ENCODE measurements at regions of chr1 and their contacts with region 1.

Region 1: DNA sequence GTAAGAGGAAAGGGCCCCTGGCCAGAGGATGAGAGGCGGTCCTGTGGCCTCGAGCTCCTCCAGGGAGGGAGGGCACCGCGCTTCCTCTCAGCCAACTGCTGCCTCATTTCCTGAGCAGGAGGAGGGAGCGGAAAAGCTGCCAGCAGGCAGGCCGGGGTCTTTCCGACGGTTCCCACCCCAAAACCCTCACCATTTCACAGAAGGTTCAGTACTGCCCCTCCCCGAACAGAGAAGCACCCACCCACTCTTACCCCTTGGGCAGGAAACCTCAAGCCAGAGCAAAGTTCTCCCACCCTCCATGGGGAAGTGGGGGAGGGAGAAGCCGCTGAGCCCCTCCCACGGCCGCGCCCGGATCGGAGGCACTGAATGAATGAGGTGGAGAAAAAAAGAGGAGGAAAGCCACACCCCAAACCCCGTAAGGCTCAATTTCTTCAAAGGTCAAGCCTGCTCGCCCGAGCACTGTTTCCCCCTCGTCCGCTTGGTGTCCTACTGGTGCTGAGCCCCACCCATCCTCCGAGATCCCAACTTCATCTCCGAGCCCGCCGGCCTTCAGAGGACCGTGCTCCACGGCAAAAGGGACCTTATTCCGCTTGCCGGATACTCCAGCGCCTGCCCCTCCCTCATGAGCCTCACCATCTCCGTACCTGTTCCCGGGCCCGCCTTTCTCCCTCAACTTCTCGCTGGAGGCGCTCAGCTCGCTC is 9.4 kb downstream of the TPM3 start:
- DNase-seq: peak; percentile 76 to 84
- H3K4me3 ChIP-seq: peak overlapping the region; percentile 70
- H3K4me3 Mint-ChIP-seq: peak overlapping the region; percentile 92
- H3K27ac Mint-ChIP-seq: peak overlapping the region; percentile 96
- H3K4me1 ChIP-seq: peaks cover 59% of the 10 kb centered on the region
- H3K4me1 Mint-ChIP-seq: peaks cover 56% of the 10 kb centered on the region
- H3K27me3 ChIP-seq: no peaks in the 10 kb centered on the region
- H3K27me3 Mint-ChIP-seq: no peaks in the 10 kb centered on the region
- CTCF ChIP-seq: peak in 1 of 2 experiments; percentile 14

Region 2: DNA sequence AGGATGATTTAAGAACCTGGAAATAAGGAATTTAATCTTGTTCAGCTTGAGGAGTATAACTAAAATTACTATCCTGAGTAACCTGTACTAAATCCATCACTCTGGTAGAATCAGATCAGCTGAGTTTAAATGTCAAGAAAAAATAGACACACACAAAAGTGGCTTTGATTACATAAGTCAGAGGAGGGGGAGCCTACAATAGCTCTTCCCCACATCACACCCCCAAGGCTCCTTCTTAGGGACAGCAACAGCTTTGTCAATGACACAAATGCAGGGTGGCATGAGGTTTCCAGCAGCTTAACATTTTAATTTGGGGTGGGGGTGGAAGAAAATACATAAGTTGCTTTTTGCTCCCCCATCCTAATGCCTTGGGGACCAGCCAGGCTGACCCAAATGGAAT is 15.0 kb before region 1 on chr1:
- CTCF ChIA-PET with region 1: no interaction called
- POLR2A ChIA-PET with region 1: interaction called, 12 read pairs
- intact Hi-C with region 1: no loop called
- DNase-seq: no peak
- H3K4me3 ChIP-seq: no peak overlapping the region
- H3K4me3 Mint-ChIP-seq: no peak overlapping the region
- H3K27ac Mint-ChIP-seq: no peak overlapping the region
- H3K4me1 ChIP-seq: no peaks in the 10 kb centered on the region
- H3K4me1 Mint-ChIP-seq: peaks cover 20% of the 10 kb centered on the region
- H3K27me3 ChIP-seq: no peaks in the 10 kb centered on the region
- H3K27me3 Mint-ChIP-seq: no peaks in the 10 kb centered on the region
- CTCF ChIP-seq: no peak

Region 3: DNA sequence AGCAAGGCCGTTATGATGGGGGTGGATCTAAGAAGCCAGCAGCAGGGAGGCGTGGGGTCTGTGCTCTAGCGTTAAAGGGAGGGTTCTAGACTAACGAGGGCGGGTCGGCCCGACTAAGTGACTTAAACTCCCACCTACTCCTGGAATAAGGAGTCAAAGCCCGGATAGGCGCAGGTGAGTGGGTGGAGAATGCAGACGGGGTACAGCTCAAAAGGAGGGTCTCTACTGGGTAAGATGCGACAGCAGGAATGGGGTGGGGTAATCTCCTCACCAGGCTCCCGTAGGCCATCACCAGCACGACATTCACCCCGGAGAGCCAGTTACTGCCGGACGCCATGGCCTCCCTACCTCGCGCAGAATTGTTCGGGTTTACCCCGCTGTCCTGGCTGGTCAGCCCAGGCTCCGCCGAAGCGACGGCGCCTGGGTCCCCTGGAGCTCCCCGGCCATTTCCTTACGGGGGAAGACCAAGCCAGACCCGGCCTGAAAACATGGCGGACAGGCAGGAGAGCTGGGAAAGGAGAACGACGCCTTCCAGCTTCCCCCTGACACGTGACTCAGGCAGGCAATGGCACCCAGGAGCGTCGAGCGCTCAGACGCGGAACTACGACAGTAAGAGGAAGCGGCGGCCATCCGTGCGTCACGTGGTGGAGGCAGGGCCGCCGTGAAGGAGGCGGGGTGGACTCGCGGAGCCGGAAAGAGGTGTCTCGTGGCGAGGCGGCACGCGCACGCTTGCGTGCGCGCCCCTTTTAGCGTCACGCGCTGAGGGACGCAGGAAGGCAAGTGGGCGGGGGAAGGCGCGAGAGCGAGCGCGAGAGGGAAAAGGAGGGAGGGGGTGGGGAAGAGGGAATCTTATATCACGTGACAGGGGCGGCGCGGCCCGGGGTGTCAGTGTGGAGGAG is 37.8 kb after region 1 on chr1 and contains the start of gene UBAP2L:
- CTCF ChIA-PET with region 1: no interaction called
- POLR2A ChIA-PET with region 1: interaction called, 4 read pairs
- intact Hi-C with region 1: loop called (anchors 1 kb)
- DNase-seq: peak; percentile 99
- H3K4me3 ChIP-seq: peak within 1 kb of the TSS; percentile 97
- H3K4me3 Mint-ChIP-seq: peak within 1 kb of the TSS; percentile 94
- H3K27ac Mint-ChIP-seq: peak within 1 kb of the TSS; percentile 99
- H3K4me1 ChIP-seq: peaks cover 31% of the 10 kb centered on the region
- H3K4me1 Mint-ChIP-seq: peaks cover 15% of the 10 kb centered on the region
- H3K27me3 ChIP-seq: no peaks in the 10 kb centered on the region
- H3K27me3 Mint-ChIP-seq: no peaks in the 10 kb centered on the region
- CTCF ChIP-seq: no peak
- total RNA-seq, gene UBAP2L: 195 and 198 TPM in 2 replicates

Region 4: GRCh38 chr1:154272217-154272998 is 89.9 kb after region 1 on chr1 and contains the start of gene HAX1:
- CTCF ChIA-PET with region 1: interaction called, 3 read pairs
- POLR2A ChIA-PET with region 1: no interaction called
- intact Hi-C with region 1: loop called (anchors 1 kb)
- DNase-seq: peak; percentile 93 to 94
- H3K4me3 ChIP-seq: peak within 1 kb of the TSS; percentile 54
- H3K4me3 Mint-ChIP-seq: peak within 1 kb of the TSS; percentile 88
- H3K27ac Mint-ChIP-seq: peak within 1 kb of the TSS; percentile 98
- H3K4me1 ChIP-seq: no peaks in the 10 kb centered on the region
- H3K4me1 Mint-ChIP-seq: peaks cover 22% of the 10 kb centered on the region
- H3K27me3 ChIP-seq: no peaks in the 10 kb centered on the region
- H3K27me3 Mint-ChIP-seq: no peaks in the 10 kb centered on the region
- CTCF ChIP-seq: peak; percentile 82 to 87
- total RNA-seq, gene HAX1: 135 and 138 TPM in 2 replicates